ENCODE measurements at regions of chr4 and their contacts with region 1.

Region 1: GRCh38 chr4:97819294-97819693 is 324.0 kb downstream of the STPG2 start:
- DNase-seq: peak; percentile 56
- H3K4me3 ChIP-seq: no peak overlapping the region
- H3K27ac ChIP-seq: no peak overlapping the region
- H3K4me1 ChIP-seq: peaks cover 23% of the 10 kb centered on the region
- H3K27me3 ChIP-seq: no peaks in the 10 kb centered on the region
- CTCF ChIP-seq: no peak
- POLR2A ChIP-seq: no peak

Region 2: DNA sequence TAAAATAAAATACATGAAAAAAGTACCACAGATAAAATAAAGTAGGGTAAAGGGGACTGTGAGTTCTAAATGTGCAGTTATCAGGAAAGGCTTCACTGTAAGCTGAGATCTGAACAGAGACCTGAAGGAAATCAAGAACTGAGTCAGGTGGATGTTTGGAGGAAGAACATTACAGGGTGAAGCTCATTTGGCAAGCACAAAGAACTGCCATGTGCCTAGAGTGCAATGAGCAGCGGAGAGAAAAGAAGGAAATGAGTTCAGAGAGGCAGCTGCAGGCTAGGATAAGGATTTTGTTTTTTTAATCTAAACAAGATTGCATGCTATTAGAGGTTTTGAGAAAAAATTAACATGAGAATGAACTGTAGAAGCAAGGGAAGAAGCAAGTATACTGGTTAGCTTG is 49.1 kb before region 1 on chr4:
- CTCF ChIA-PET with region 1: interaction called, 5 read pairs
- POLR2A ChIA-PET with region 1: no interaction called
- dilution Hi-C with region 1: no loop called
- intact Hi-C with region 1: loop called (anchors 5 kb)
- DNase-seq: peak; percentile 95
- H3K4me3 ChIP-seq: peak overlapping the region in 1 of 3 experiments; percentile 21
- H3K27ac ChIP-seq: peak overlapping the region; percentile 76
- H3K4me1 ChIP-seq: peaks cover 19% of the 10 kb centered on the region
- H3K27me3 ChIP-seq: no peaks in the 10 kb centered on the region
- CTCF ChIP-seq: no peak
- POLR2A ChIP-seq: no peak